Lower leg skin (tissue), 4 donors: ENCODE measurements at regions of chr12 and their contacts with region 1.

Region 1: GRCh38 chr12:49507139-49507538 is 31.7 kb upstream of the KCNH3 start:
- DNase-seq: no peak
- H3K4me3 ChIP-seq: no peak overlapping the region
- CTCF ChIP-seq: no peak
- POLR2A ChIP-seq: no peak

Region 2: DNA sequence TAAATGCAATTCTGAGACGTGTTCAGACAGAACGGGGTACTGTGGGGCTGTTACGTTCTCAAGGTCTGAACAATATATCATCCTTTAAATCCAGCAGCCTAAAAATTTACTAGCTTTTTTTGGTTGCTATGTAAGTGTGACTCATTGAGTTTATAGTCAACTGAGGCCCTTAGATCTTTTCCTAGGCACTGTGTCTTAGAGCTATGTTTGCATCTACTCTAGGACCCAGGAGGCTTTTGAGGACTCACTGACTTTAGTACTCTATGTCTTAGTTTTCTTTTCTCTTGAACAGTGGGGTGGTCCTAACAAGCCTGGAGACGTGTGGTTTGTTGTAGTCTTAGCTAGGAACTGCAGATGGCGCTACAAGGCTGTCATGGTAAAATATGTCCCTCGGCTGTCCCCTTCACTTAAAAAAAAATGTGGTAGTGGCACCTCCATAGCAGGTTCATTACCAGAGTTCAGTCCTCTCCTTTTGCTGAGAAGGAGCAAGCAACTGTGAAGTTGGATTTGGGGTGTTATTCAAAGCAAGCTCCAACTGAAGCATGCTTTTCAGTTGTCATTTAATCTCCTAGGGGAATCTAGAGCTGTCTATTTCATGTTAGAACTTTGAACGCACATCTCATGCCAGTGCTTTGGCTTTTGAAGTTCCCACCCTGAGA is 148.5 kb before region 1 on chr12:
- intact Hi-C with region 1: loop called (anchors 5 kb)
- DNase-seq: no peak
- H3K4me3 ChIP-seq: no peak overlapping the region
- CTCF ChIP-seq: peak in 1 of 3 donors; percentile 63
- POLR2A ChIP-seq: no peak

Region 3: DNA sequence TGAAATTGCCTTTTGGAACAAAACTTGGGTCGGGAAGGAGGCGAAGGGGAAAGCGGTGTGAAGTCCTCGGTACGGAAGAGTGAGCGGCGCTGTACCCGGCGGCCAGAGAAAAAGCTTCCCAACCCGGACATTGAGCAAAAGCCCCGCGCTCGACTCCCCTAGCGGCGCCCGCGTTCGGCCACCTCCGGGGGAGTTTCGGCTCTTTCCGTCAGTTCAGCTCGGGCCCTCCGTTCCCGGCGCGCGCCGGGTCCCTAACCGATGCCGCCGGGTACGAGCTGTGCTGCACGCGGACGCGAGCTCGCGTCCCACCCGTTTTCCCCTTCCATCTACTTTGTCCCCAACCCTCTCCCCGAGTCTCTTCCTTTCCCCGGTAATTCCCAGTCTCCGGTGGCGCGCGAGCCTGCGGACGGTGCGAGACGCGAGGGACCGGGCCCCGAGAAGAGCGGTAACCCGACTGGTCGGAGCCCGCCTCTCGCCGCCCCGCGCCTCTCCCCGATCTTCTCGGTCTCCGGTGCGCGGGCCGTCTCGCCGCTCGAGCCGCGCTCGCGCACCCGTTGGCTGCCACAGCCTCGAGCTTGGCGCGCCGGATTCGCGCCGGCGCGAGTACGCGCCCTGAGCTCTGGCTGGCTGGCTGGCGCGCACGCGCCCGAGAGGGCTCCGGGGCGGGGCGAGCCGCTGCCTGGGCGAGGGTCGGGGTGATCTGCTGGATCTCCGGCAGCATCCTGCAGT is 140.3 kb before region 1 on chr12:
- intact Hi-C with region 1: loop called (anchors 5 kb)
- DNase-seq: peak; percentile 78 to 96
- H3K4me3 ChIP-seq: peak overlapping the region; percentile 75
- CTCF ChIP-seq: no peak
- POLR2A ChIP-seq: no peak

Region 4: GRCh38 chr12:50647479-50647878 is 1140.3 kb after region 1 on chr12:
- intact Hi-C with region 1: no loop called
- DNase-seq: no peak
- H3K4me3 ChIP-seq: no peak overlapping the region
- CTCF ChIP-seq: no peak
- POLR2A ChIP-seq: no peak